Aorta (tissue), 5 donors: ENCODE measurements at regions of chr4 and their contacts with region 1.

Region 1: GRCh38 chr4:118968005-118968404 is 79.4 kb downstream of the SYNPO2 start:
- DNase-seq: peak in 1 of 2 donors; percentile 78
- ATAC-seq: peak; percentile 89
- H3K4me3 ChIP-seq: no peak overlapping the region
- H3K27ac ChIP-seq: peak overlapping the region; percentile 85 to 97
- H3K4me1 ChIP-seq: peaks cover 11 to 21% of the 10 kb centered on the region in 2 donors
- H3K27me3 ChIP-seq: no peaks in the 10 kb centered on the region

Region 2: DNA sequence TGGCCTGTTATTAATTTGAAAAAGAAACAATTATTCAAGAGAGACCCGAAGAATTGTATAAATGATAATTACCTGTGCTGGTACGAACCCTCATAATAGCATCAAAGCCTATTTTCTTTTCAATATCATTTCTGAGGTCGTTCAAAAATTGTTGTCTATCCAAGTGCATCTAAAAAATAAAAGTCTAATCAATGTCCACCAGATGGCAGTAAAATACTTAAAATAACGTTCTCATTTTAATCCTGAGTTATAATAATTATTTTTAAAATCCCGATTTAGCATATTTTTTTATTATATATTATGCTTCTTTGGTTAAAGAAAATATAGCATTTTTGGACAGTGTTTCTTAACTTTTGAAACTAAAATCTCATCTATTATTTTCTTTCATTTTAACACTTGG is 227.1 kb before region 1 on chr4:
- intact Hi-C with region 1: loop called in 1 of 2 experiments (anchors 2 kb)
- DNase-seq: no peak
- ATAC-seq: no peak
- H3K4me3 ChIP-seq: no peak overlapping the region
- H3K27ac ChIP-seq: no peak overlapping the region
- H3K4me1 ChIP-seq: peaks cover 2 to 3% of the 10 kb centered on the region in 2 donors
- H3K27me3 ChIP-seq: no peaks in the 10 kb centered on the region

Region 3: DNA sequence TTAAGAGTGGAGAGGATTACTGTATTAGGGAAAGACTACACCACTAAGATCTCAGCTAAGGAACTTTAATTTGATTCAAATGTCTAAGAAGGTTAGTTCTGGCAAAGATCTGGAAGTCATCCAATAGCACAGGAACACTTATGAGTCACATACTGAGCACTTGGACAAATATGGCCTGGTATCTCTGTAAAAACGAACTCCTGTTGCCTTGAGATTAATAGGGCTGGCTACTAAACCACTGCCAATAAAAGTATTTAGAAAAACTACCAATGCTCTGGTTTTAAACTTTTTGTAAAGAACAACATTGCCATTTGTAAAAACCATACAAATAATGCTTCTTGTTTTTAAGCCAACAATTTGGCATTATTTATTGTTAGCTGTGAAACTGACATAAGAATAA is 202.6 kb before region 1 on chr4:
- intact Hi-C with region 1: loop called (anchors 5 kb)
- DNase-seq: no peak
- ATAC-seq: peak; percentile 79
- H3K4me3 ChIP-seq: no peak overlapping the region
- H3K27ac ChIP-seq: peak overlapping the region in 1 of 2 donors; percentile 82
- H3K4me1 ChIP-seq: peaks cover 7 to 15% of the 10 kb centered on the region in 2 donors
- H3K27me3 ChIP-seq: no peaks in the 10 kb centered on the region

Region 4: GRCh38 chr4:118888666-118889311 is 79.2 kb before region 1 on chr4 and contains the start of gene SYNPO2:
- intact Hi-C with region 1: loop called (anchors 2 to 5 kb)
- DNase-seq: peak; percentile 90 to 93
- ATAC-seq: peak; percentile 95
- H3K4me3 ChIP-seq: peak within 1 kb of the TSS; percentile 69 to 99
- H3K27ac ChIP-seq: peak within 1 kb of the TSS; percentile 8 to 93
- H3K4me1 ChIP-seq: peaks cover 0 to 2% of the 10 kb centered on the region in 2 donors
- H3K27me3 ChIP-seq: no peaks in the 10 kb centered on the region
- total RNA-seq, gene SYNPO2: 393 to 1,531 TPM

Region 5: DNA sequence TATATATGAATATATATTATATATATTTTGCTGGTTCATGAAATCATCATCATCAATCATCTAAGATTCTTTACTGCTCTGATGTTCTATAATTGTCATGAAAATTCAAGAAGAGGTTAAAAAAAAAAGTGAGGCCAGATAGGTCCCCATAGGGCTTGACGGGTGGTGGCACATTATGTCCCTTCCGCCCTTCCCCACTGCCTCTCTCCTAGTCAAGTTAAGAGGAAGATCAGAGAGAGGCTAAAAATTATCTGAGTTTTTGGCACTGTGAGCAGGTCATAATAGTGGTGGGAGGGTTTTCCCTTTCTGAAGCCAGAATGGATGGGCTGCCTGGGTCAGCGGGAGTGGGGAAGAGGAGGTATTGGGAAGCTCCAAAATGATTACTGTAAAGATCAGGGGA is 74.0 kb before region 1 on chr4:
- intact Hi-C with region 1: loop called (anchors 2 to 5 kb)
- DNase-seq: no peak
- ATAC-seq: no peak
- H3K4me3 ChIP-seq: peak overlapping the region; percentile 6 to 53
- H3K27ac ChIP-seq: peak overlapping the region; percentile 28 to 93
- H3K4me1 ChIP-seq: peaks cover 0 to 2% of the 10 kb centered on the region in 2 donors
- H3K27me3 ChIP-seq: no peaks in the 10 kb centered on the region

Region 6: GRCh38 chr4:118939169-118939783 is 28.7 kb before region 1 on chr4:
- intact Hi-C with region 1: no loop called
- DNase-seq: no peak
- ATAC-seq: peak; percentile 81
- H3K4me3 ChIP-seq: peak overlapping the region; percentile 38 to 46
- H3K27ac ChIP-seq: peak overlapping the region; percentile 36 to 93
- H3K4me1 ChIP-seq: peaks cover 7 to 14% of the 10 kb centered on the region in 2 donors
- H3K27me3 ChIP-seq: no peaks in the 10 kb centered on the region

Region 7: GRCh38 chr4:118950224-118950623 is 17.8 kb before region 1 on chr4:
- intact Hi-C with region 1: no loop called
- DNase-seq: no peak
- ATAC-seq: no peak
- H3K4me3 ChIP-seq: no peak overlapping the region
- H3K27ac ChIP-seq: peak overlapping the region in 1 of 2 donors; percentile 17
- H3K4me1 ChIP-seq: peaks cover 5 to 10% of the 10 kb centered on the region in 2 donors
- H3K27me3 ChIP-seq: no peaks in the 10 kb centered on the region

Region 8: DNA sequence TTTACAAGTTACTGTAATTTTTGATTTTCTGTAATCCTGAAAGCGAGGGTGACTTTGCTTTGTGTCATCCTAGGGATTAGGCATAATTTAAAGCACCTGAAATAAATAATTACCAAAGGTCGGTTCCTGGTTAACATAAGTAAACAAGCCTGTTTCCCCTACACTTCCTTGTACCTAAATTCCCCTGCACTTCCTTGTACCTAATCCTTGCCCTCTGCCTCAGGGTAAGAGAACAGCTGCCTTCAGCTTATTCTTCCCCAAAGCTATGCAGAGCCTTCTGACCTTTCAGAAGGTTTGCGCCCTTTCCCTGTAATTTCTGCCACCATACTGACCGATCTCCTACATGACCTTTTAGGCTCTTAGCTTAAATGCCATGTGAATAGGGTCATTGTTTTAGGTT is 826.7 kb after region 1 on chr4:
- intact Hi-C with region 1: no loop called
- DNase-seq: no peak
- ATAC-seq: no peak
- H3K4me3 ChIP-seq: no peak overlapping the region
- H3K27ac ChIP-seq: no peak overlapping the region
- H3K4me1 ChIP-seq: no peaks in the 10 kb centered on the region
- H3K27me3 ChIP-seq: no peaks in the 10 kb centered on the region